ENCODE measurements at regions of chr18 and their contacts with region 1.

Region 1: DNA sequence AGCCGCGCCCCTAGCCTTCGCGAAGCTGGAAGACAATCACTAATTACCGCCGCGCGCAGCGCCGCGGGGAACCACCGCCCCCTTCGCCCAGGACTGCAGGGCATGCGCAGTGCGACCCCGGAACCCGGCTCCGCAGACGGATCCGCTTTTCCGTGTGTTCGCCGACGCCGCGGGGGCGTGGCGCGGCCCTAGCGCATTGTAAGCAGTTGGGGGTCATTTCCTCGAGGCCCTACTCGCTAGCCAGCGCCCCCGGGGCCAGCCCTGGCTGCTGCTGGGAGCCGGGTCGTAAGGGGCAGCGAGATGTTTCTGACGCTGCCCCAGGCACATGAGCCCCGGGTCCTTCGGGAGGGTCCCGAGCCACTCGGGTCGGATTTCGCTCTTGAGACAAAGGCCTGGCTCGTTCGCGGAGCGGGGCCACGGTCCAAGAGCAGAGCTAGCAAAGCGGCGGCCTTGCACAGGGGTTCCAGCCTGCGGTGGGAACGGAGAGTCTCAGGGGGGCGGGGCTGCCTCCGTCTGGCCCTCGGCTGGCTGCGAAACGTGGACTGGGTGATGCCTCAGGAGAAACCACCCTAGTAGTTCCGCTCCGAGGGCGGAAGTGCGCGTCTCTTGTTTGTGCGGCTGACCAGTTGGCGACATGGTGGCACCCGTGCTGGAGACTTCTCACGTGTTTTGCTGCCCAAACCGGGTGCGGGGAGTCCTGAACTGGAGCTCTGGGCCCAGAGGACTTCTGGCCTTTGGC is at the starts of genes ELP2 and SLC39A6:
- DNase-seq: peak; percentile 89 to 98 (median 95)
- ATAC-seq: peak; percentile 94
- H3K4me3 ChIP-seq: peak within 1 kb of the TSS; percentile 99
- H3K4me3 Mint-ChIP-seq: peak within 1 kb of the TSS; percentile 87 to 98 (median 95)
- H3K27ac ChIP-seq: peak within 1 kb of the TSS; percentile 96
- H3K27ac Mint-ChIP-seq: peak within 1 kb of the TSS; percentile 93 to 99 (median 98)
- H3K4me1 ChIP-seq: peaks cover 33 to 35% of the 10 kb centered on the region in 2 donors
- H3K4me1 Mint-ChIP-seq: peaks cover 39 to 81% (median 61%) of the 10 kb centered on the region in 7 donors
- H3K27me3 ChIP-seq: no peaks in the 10 kb centered on the region
- H3K27me3 Mint-ChIP-seq: no peaks in the 10 kb centered on the region
- total RNA-seq, gene ELP2: 79.3 to 177 (median 150) TPM
- total RNA-seq, gene SLC39A6: 12.1 to 25.2 (median 16.6) TPM

Region 2: GRCh38 chr18:35240664-35241447 is 888.6 kb before region 1 on chr18 and contains the start of gene ZNF397:
- CTCF ChIA-PET with region 1: no interaction called
- POLR2A ChIA-PET with region 1: no interaction called
- intact Hi-C with region 1: loop called (anchors 1 to 2 kb)
- DNase-seq: peak; percentile 87 to 96 (median 91)
- ATAC-seq: peak; percentile 99
- H3K4me3 ChIP-seq: peak within 1 kb of the TSS; percentile 94
- H3K4me3 Mint-ChIP-seq: peak within 1 kb of the TSS; percentile 88 to 98 (median 96)
- H3K27ac ChIP-seq: peak within 1 kb of the TSS; percentile 97
- H3K27ac Mint-ChIP-seq: peak within 1 kb of the TSS; percentile 90 to 99 (median 98)
- H3K4me1 ChIP-seq: peaks cover 9 to 17% of the 10 kb centered on the region in 2 donors
- H3K4me1 Mint-ChIP-seq: peaks cover 16 to 41% (median 31%) of the 10 kb centered on the region in 7 donors
- H3K27me3 ChIP-seq: no peaks in the 10 kb centered on the region
- H3K27me3 Mint-ChIP-seq: no peaks in the 10 kb centered on the region
- total RNA-seq, gene ZNF397: 12.1 to 59.1 (median 27.6) TPM

Region 3: DNA sequence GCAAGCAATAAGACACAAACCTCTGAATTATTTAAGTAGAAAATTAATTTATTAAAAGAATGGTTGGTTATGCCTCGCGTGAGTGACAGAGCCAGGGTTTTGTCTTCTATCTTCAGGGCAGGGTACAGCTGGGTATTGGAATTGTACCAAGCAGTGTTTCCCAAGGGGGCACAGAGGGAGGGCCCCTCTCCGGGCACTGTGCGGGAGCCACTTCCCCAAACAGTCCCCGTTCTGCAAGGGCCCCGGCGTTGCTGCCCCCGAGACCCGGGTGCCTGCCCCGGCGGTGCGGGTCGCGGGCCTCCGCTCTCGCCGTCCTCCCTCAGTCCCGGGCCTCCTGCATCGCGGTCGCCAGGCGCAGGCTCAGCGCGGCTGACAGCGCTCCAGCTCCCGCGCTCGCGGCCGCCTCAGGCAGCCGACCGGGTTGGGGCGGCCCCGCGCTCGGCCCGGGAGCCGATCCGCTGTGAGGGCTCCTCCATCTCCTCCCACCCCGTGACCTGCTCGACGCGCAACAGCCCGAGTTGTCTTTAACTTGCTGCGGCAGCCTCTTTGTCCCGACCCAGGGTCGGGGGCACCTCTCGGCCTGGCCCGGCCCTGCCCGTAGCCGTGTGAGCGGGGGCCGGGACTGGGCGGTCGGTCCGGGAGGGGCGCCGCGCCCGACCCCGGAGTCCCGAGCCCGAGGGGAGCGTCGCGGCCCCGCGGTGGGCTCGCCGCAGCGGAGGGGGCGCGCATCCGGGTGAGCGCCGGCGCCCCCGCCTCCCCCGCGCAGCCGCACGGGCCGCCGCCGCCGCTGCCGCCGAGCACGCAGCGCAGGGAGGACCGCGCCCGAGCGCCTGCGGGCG is 548.5 kb before region 1 on chr18:
- CTCF ChIA-PET with region 1: no interaction called
- POLR2A ChIA-PET with region 1: no interaction called
- intact Hi-C with region 1: loop called (anchors 5 kb)
- DNase-seq: peak; percentile 54 to 70 (median 63)
- ATAC-seq: peak; percentile 84
- H3K4me3 ChIP-seq: peak overlapping the region; percentile 61
- H3K4me3 Mint-ChIP-seq: peak overlapping the region; percentile 60 to 80 (median 72)
- H3K27ac ChIP-seq: peak overlapping the region; percentile 77
- H3K27ac Mint-ChIP-seq: peak overlapping the region in 5 of 9 donors; percentile 37 to 80 (median 63)
- H3K4me1 ChIP-seq: peaks cover 11% of the 10 kb centered on the region in 2 donors
- H3K4me1 Mint-ChIP-seq: peaks cover 13 to 39% (median 28%) of the 10 kb centered on the region in 7 donors
- H3K27me3 ChIP-seq: no peaks in the 10 kb centered on the region
- H3K27me3 Mint-ChIP-seq: peaks cover 0 to 18% (median 7%) of the 10 kb centered on the region in 5 donors

Region 4: DNA sequence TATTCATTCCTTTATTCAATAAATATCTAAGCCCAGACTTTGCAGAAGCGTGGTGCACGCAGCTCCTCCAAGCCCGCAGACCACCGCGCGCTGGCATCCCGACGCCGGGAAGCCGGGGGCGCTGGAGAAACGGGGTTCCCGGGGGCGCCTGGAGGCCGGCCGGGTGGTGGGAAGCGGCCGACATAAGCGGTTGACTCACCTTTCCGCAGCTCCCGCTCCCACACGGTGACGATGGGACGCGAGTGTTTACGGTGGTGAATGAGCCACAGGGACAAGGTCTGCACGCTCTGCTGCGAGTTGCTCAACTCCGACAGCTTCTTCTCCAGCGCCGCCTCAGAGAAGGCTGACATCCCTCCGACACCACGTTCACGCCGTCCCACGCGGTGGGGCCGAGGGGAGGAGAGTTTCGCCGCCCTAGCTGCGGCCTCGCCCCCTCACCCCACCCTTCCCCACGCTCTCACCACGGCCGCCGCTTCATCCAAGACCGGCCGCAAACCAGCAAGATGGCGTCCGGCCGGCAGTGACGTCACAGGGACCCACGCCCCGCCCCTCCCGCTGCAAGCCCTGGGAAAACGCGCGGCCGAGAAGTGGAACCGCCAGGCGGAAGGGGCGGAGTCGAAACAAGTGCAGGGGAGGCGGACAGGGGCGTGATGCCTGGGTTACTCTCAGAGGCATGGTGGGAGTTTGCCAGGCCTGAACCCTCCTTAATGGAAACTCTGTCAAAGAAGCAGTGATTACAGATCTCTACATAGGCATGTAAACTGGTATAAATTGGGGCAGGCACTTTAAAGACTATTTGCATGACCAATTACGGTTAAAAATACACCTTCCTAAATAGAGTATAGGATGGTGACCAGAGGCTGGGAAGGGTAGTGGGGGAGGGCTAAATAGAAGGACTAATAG is 62.2 kb before region 1 on chr18 and contains the start of gene RPRD1A:
- CTCF ChIA-PET with region 1: no interaction called
- POLR2A ChIA-PET with region 1: interaction called, 15 read pairs
- intact Hi-C with region 1: loop called (anchors 1 kb)
- DNase-seq: peak; percentile 90 to 98 (median 94)
- ATAC-seq: peak; percentile 96
- H3K4me3 ChIP-seq: peak within 1 kb of the TSS; percentile 88
- H3K4me3 Mint-ChIP-seq: peak within 1 kb of the TSS; percentile 92 to 98 (median 96)
- H3K27ac ChIP-seq: peak within 1 kb of the TSS; percentile 79
- H3K27ac Mint-ChIP-seq: peak within 1 kb of the TSS; percentile 85 to 97 (median 94)
- H3K4me1 ChIP-seq: peaks cover 11 to 16% of the 10 kb centered on the region in 2 donors
- H3K4me1 Mint-ChIP-seq: peaks cover 26 to 50% (median 44%) of the 10 kb centered on the region in 7 donors
- H3K27me3 ChIP-seq: no peaks in the 10 kb centered on the region
- H3K27me3 Mint-ChIP-seq: peaks cover 0 to 5% (median 0%) of the 10 kb centered on the region in 5 donors
- total RNA-seq, gene RPRD1A: 22.6 to 51.3 (median 28.7) TPM

Region 5: GRCh38 chr18:36162981-36163380 is 33.5 kb after region 1 on chr18:
- CTCF ChIA-PET with region 1: no interaction called
- POLR2A ChIA-PET with region 1: no interaction called
- intact Hi-C with region 1: loop called in 1 of 2 experiments (anchors 5 kb)
- DNase-seq: no peak
- ATAC-seq: no peak
- H3K4me3 ChIP-seq: no peak overlapping the region
- H3K4me3 Mint-ChIP-seq: no peak overlapping the region
- H3K27ac ChIP-seq: no peak overlapping the region
- H3K27ac Mint-ChIP-seq: peak overlapping the region in 1 of 9 donors; percentile 40
- H3K4me1 ChIP-seq: no peaks in the 10 kb centered on the region
- H3K4me1 Mint-ChIP-seq: peaks cover 4 to 26% (median 13%) of the 10 kb centered on the region in 7 donors
- H3K27me3 ChIP-seq: no peaks in the 10 kb centered on the region
- H3K27me3 Mint-ChIP-seq: no peaks in the 10 kb centered on the region

Region 6: GRCh38 chr18:36828630-36829361 is 699.3 kb after region 1 on chr18 and contains the starts of genes KIAA1328 and TPGS2:
- CTCF ChIA-PET with region 1: interaction called, 3 read pairs
- POLR2A ChIA-PET with region 1: interaction called, 9 read pairs
- intact Hi-C with region 1: loop called (anchors 1 kb)
- DNase-seq: peak; percentile 77 to 90 (median 87)
- ATAC-seq: peak; percentile 96
- H3K4me3 ChIP-seq: peak within 1 kb of the TSS; percentile 79
- H3K4me3 Mint-ChIP-seq: peak within 1 kb of the TSS; percentile 73 to 98 (median 92)
- H3K27ac ChIP-seq: peak within 1 kb of the TSS; percentile 75
- H3K27ac Mint-ChIP-seq: peak within 1 kb of the TSS; percentile 57 to 98 (median 90)
- H3K4me1 ChIP-seq: peaks cover 15 to 18% of the 10 kb centered on the region in 2 donors
- H3K4me1 Mint-ChIP-seq: peaks cover 27 to 60% (median 47%) of the 10 kb centered on the region in 7 donors
- H3K27me3 ChIP-seq: no peaks in the 10 kb centered on the region
- H3K27me3 Mint-ChIP-seq: no peaks in the 10 kb centered on the region
- total RNA-seq, gene KIAA1328: 8.1 to 17.6 (median 16.0) TPM
- total RNA-seq, gene TPGS2: 16.9 to 92.8 (median 53.5) TPM

Region 7: GRCh38 chr18:36903215-36903928 is 773.9 kb after region 1 on chr18:
- CTCF ChIA-PET with region 1: no interaction called
- POLR2A ChIA-PET with region 1: no interaction called
- intact Hi-C with region 1: no loop called
- DNase-seq: no peak
- ATAC-seq: no peak
- H3K4me3 ChIP-seq: no peak overlapping the region
- H3K4me3 Mint-ChIP-seq: no peak overlapping the region
- H3K27ac ChIP-seq: no peak overlapping the region
- H3K27ac Mint-ChIP-seq: no peak overlapping the region
- H3K4me1 ChIP-seq: no peaks in the 10 kb centered on the region
- H3K4me1 Mint-ChIP-seq: no peaks in the 10 kb centered on the region
- H3K27me3 ChIP-seq: no peaks in the 10 kb centered on the region
- H3K27me3 Mint-ChIP-seq: no peaks in the 10 kb centered on the region